Gastrocnemius medialis (tissue), 4 donors: ENCODE measurements at regions of chr2 and their contacts with region 1.

Region 1: DNA sequence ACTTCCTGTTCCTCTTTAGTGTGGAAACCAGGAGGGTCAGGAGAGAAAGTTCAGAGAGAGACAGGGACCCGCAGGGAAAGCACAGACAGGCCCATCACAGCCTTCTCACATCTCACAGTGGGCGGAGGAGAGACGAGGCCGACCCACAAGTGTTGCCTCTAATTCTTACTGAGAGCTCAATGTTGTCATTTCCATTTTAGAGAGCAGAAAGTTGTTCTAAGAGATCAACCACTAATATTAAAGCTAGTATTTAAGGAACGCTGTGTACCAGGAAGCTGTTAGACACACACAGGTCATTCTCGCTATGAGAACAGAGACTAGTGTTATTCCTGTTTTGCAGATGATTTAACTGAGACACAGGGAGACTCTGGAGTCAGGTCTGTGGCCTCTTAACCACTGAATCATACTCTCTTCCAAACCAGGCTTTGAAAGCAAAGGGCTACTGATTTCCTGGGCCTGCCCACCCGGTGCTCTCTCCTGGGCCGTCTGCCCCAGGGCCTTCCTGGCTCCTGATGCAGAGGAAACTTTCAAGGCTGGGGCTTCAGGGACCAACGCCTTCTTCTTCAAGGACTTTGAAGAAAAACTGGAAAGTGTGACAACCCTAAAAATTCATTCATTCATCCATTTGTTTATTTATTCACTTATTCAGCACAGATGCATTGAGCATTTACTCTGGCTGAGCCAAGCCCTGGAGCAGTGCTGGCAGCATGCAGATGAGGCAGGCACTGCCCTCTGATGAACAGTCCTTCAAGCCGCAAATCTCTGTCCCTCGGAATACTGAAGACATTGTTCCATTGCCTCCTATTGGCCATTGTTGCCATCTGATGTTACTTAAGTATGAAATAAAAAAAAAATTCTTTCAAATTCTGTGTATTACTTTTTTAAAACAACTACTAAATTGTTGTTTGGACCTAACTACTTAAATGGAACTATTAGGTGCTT is 37.2 kb upstream of the BIN1 start:
- DNase-seq: peak in 1 of 2 donors; percentile 76
- ATAC-seq: peak; percentile 30 to 42
- H3K4me3 ChIP-seq: no peak overlapping the region
- H3K27ac ChIP-seq: peak overlapping the region; percentile 89 to 99 (median 96)
- H3K4me1 ChIP-seq: peaks cover 55 to 62% of the 10 kb centered on the region in 2 donors
- H3K27me3 ChIP-seq: no peaks in the 10 kb centered on the region
- CTCF ChIP-seq: peak in 2 of 5 experiments; percentile 19 to 28
- POLR2A ChIP-seq: peak; percentile 0 to 7

Region 2: GRCh38 chr2:127074358-127074757 is 69.8 kb before region 1 on chr2:
- in situ Hi-C with region 1: no loop called
- intact Hi-C with region 1: loop called (anchors 2 kb)
- DNase-seq: peak; percentile 88 to 95
- ATAC-seq: peak; percentile 64 to 78
- H3K4me3 ChIP-seq: peak overlapping the region in 2 of 4 donors; percentile 23 to 51
- H3K27ac ChIP-seq: peak overlapping the region; percentile 97 to 100 (median 100)
- H3K4me1 ChIP-seq: peaks cover 95 to 97% of the 10 kb centered on the region in 2 donors
- H3K27me3 ChIP-seq: no peaks in the 10 kb centered on the region
- CTCF ChIP-seq: no peak
- POLR2A ChIP-seq: peak in 1 of 2 donors; percentile 95

Region 3: DNA sequence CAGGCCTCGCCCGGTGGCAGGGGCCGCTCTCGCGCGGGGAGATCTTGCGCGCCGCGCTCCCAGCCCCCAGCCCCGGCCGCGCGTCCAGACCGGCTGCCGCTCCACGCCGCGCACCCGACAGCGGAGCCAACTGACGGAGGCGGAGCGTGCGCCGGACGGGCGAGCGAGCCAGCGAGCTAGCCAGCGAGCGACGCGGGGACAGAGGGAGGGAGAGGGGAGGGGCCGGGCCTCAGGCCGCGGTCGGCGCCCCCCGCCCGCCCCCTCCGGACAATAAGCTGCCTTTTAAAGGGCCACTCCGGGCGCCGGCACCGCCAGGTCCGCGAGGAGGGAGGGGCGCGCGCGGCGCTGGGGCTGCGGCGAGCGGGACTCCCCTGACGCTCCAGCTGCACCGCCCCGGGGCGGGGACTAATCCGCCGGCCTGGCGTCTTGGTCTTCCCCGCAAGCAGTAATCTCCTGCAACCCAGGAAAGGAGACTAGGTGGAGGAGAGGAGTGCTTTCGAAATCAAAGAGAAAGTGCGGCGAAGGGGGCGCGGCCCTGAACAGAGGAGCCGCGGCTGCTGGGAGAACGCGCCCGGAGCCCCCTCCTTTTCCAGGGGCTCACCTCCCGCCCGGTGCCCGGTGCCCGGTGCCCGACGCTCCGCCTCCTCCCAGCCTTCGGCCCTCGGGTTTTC is 37.0 kb before region 1 on chr2 and contains the start of gene BIN1:
- in situ Hi-C with region 1: no loop called
- intact Hi-C with region 1: loop called (anchors 1 kb)
- DNase-seq: peak; percentile 87 to 96
- ATAC-seq: peak; percentile 56 to 60
- H3K4me3 ChIP-seq: peak within 1 kb of the TSS; percentile 81 to 95 (median 90)
- H3K27ac ChIP-seq: peak within 1 kb of the TSS; percentile 97 to 100 (median 100)
- H3K4me1 ChIP-seq: peaks cover 26 to 44% of the 10 kb centered on the region in 2 donors
- H3K27me3 ChIP-seq: no peaks in the 10 kb centered on the region
- CTCF ChIP-seq: peak in 2 of 5 experiments; percentile 3 to 10
- POLR2A ChIP-seq: peak; percentile 99
- total RNA-seq, gene BIN1: 1,150 to 2,167 (median 1,736) TPM

Region 4: DNA sequence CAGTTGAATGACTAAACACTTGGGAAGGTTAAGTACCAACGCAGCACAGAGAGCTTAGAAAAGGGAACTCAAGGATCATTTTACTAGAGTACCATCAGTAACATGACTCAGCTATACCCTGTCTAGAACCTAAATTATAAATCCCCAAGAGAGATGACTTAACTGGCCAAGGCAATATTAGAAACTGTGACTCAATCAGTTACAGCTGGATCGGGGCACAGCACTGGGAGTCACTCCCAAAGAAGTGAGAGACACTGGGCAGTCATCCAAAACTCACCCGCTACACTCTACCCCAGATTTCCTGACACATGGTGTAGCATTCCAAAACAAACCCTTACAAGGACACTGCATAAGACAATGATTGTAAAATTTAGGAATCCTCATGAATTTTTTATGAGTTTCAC is 364.5 kb after region 1 on chr2:
- in situ Hi-C with region 1: no loop called
- intact Hi-C with region 1: no loop called
- DNase-seq: peak; percentile 87 to 89
- ATAC-seq: peak; percentile 92 to 98
- H3K4me3 ChIP-seq: no peak overlapping the region
- H3K27ac ChIP-seq: peak overlapping the region; percentile 88 to 92 (median 90)
- H3K4me1 ChIP-seq: peaks cover 65% of the 10 kb centered on the region in 2 donors
- H3K27me3 ChIP-seq: no peaks in the 10 kb centered on the region
- CTCF ChIP-seq: no peak
- POLR2A ChIP-seq: no peak